Heart left ventricle (tissue), 16 donors: ENCODE measurements at regions of chr21 and their contacts with region 1.

Region 1: DNA sequence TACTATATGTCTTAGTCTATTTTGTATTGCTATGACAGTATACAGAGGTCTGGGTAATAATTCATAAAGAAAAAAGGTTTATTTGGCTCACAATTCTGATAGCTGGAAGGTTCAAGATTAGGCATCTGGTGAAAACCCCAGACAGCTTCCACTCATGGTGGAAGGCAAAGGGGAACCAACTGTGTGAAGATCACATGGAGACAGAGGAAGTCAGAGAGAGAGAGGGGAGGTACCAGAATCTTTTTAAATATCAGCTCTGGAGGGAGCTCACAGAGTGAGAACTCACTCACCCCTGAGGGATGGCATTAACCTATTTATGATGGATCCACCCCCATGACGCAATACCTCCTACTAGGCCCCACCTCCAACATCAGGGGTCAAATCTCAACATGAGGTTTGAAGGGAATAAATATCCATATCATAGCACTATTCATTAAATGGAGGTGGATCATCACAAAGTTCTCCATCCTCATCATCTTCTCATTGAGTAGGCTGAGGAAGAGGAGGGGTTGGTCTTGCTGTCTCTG is 290.5 kb downstream of the DSCAM start:
- DNase-seq: no peak
- ATAC-seq: no peak
- H3K4me3 ChIP-seq: no peak overlapping the region
- H3K27ac ChIP-seq: no peak overlapping the region
- H3K4me1 ChIP-seq: no peaks in the 10 kb centered on the region
- H3K27me3 ChIP-seq: no peaks in the 10 kb centered on the region
- CTCF ChIP-seq: no peak
- POLR2A ChIP-seq: no peak

Region 2: DNA sequence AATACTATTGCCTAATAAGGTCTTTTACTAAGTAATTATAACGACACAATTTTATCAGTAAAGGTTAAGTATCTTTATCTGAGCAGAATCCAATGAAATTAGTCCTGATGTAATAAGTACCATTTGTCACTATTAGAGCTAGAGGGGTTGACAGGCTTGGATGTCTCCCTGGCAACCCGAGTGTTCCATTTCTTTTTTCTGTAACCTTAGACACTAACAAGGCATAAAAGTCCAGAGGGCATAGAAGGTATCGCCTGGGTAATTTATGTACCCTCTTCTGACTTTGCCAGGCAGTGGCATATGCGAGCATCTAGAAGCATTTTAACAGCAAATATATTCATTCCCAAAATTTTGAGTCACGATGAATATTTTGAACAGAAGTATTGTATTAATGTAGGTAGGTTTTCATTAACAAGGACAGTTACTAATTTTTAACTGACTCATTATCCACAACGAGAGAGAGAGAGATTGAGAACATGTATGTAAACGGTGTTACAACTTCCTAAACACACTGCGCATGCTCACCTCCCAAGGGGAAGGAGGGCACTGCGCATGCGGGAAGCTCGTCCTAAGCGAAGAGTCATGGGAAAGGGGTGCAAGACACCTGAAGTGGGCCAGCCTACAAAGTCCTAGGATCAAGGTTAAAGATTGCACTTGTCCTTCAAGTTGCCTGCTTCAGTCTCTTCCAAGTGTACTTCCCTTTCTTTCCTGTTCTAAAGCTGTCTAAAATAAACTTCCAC is 133.4 kb before region 1 on chr21:
- intact Hi-C with region 1: no loop called
- DNase-seq: no peak
- ATAC-seq: no peak
- H3K4me3 ChIP-seq: no peak overlapping the region
- H3K27ac ChIP-seq: no peak overlapping the region
- H3K4me1 ChIP-seq: no peaks in the 10 kb centered on the region
- H3K27me3 ChIP-seq: no peaks in the 10 kb centered on the region
- CTCF ChIP-seq: no peak
- POLR2A ChIP-seq: no peak

Region 3: DNA sequence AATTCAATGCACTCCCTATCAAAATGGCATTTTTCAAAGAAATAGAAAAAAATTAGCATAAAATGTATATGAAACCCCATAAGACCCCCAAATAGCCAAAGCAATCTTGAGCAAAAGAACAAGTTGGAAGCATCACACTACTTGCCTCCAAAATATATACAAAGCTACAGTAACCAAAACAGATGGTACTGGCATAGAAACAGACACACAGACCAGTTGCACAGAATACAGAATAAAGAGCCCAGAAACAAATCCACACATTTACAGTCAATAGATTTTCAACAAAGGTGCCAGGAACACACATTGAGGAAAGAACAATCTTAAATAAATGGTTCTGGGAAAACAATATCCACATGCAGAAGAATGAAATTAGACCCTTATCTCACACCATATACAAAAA is 60.4 kb before region 1 on chr21:
- intact Hi-C with region 1: loop called in 1 of 10 experiments (anchors 10 kb)
- DNase-seq: no peak
- ATAC-seq: no peak
- H3K4me3 ChIP-seq: no peak overlapping the region
- H3K27ac ChIP-seq: no peak overlapping the region
- H3K4me1 ChIP-seq: no peaks in the 10 kb centered on the region
- H3K27me3 ChIP-seq: no peaks in the 10 kb centered on the region
- CTCF ChIP-seq: no peak
- POLR2A ChIP-seq: no peak

Region 4: GRCh38 chr21:40602080-40602479 is 45.6 kb after region 1 on chr21:
- intact Hi-C with region 1: loop called in 1 of 10 experiments (anchors 5 kb)
- DNase-seq: peak in 2 of 5 donors; percentile 17 to 58
- ATAC-seq: peak in 1 of 4 donors; percentile 13
- H3K4me3 ChIP-seq: no peak overlapping the region
- H3K27ac ChIP-seq: no peak overlapping the region
- H3K4me1 ChIP-seq: no peaks in the 10 kb centered on the region
- H3K27me3 ChIP-seq: no peaks in the 10 kb centered on the region
- CTCF ChIP-seq: no peak
- POLR2A ChIP-seq: no peak

Region 5: GRCh38 chr21:40923407-40923806 is 366.9 kb after region 1 on chr21:
- intact Hi-C with region 1: no loop called
- DNase-seq: no peak
- ATAC-seq: no peak
- H3K4me3 ChIP-seq: no peak overlapping the region
- H3K27ac ChIP-seq: no peak overlapping the region
- H3K4me1 ChIP-seq: no peaks in the 10 kb centered on the region
- H3K27me3 ChIP-seq: no peaks in the 10 kb centered on the region
- CTCF ChIP-seq: no peak
- POLR2A ChIP-seq: no peak